ENCODE measurements at regions of chr7 and their contacts with region 1.

Region 1: GRCh38 chr7:44565097-44565794 is 8.5 kb downstream of the DDX56 start:
- DNase-seq: peak; percentile 56
- H3K4me3 ChIP-seq: no peak overlapping the region
- H3K27ac ChIP-seq: no peak overlapping the region
- H3K4me1 ChIP-seq: no peaks in the 10 kb centered on the region
- H3K27me3 ChIP-seq: no peaks in the 10 kb centered on the region
- CTCF ChIP-seq: peak; percentile 90 to 98 (median 94)
- POLR2A ChIP-seq: no peak

Region 2: DNA sequence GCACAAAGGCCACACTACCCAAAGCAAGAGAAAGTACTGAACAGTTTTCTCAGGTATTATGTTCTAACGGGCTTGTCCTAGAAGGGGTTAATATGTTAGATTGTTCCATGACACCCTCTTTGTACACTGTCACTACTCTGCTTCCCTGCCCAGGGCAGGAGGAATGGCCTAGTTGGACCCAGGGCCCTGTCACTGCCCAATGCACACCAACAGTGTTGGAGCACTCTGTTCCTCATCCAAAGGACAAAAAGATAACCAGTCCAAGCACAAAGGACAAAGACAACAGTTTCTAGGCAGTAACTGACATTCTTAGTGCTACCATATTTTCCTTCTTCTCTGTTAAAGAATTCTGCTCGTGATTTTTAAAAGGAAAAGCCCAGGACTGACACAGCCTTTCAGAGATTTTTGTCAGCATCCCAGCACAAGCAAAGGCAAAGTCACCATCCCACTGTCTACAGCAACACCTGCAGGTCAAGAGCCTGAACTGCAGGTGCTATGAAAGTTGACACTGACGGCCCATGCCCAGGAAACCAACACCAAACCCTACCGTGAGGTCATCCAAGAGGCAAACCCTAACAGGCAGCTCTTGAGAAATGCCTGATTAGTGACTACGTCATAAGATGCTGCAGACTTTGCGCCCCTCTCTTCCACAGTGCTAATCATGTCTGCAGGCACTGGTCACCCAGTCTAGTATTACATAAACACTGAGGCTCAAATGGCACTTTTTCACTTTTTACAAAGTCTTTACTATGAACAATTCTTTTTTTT is 88.0 kb before region 1 on chr7:
- intact Hi-C with region 1: loop called (anchors 5 kb)
- DNase-seq: peak; percentile 27
- H3K4me3 ChIP-seq: no peak overlapping the region
- H3K27ac ChIP-seq: no peak overlapping the region
- H3K4me1 ChIP-seq: no peaks in the 10 kb centered on the region
- H3K27me3 ChIP-seq: no peaks in the 10 kb centered on the region
- CTCF ChIP-seq: peak; percentile 65 to 89 (median 76)
- POLR2A ChIP-seq: no peak